ENCODE measurements at regions of chr3 and their contacts with region 1.

Region 1: GRCh38 chr3:179322286-179323196 is at the start of gene ZNF639:
- DNase-seq: peak; percentile 78
- H3K4me3 Mint-ChIP-seq: peak within 1 kb of the TSS; percentile 90
- H3K27ac Mint-ChIP-seq: peak within 1 kb of the TSS; percentile 92
- H3K4me1 Mint-ChIP-seq: peaks cover 32% of the 10 kb centered on the region
- H3K27me3 Mint-ChIP-seq: peaks cover 16% of the 10 kb centered on the region
- total RNA-seq, gene ZNF639: 36.2 and 37.0 TPM in 2 replicates

Region 2: GRCh38 chr3:179071550-179072397 is 250.8 kb before region 1 on chr3 and contains the start of gene ZMAT3:
- intact Hi-C with region 1: loop called (anchors 1 kb)
- DNase-seq: peak; percentile 84
- H3K4me3 Mint-ChIP-seq: peak within 1 kb of the TSS; percentile 98
- H3K27ac Mint-ChIP-seq: peak within 1 kb of the TSS; percentile 95
- H3K4me1 Mint-ChIP-seq: peaks cover 43% of the 10 kb centered on the region
- H3K27me3 Mint-ChIP-seq: peaks cover 3% of the 10 kb centered on the region
- total RNA-seq, gene ZMAT3: 16.9 and 17.3 TPM in 2 replicates

Region 3: GRCh38 chr3:179347345-179348194 is 25.0 kb after region 1 on chr3 and contains the start of gene MFN1:
- intact Hi-C with region 1: loop called (anchors 1 kb)
- DNase-seq: peak; percentile 87
- H3K4me3 Mint-ChIP-seq: peak within 1 kb of the TSS; percentile 98
- H3K27ac Mint-ChIP-seq: peak within 1 kb of the TSS; percentile 96
- H3K4me1 Mint-ChIP-seq: peaks cover 25% of the 10 kb centered on the region
- H3K27me3 Mint-ChIP-seq: no peaks in the 10 kb centered on the region
- total RNA-seq, gene MFN1: 29.5 and 37.7 TPM in 2 replicates

Region 4: GRCh38 chr3:179604321-179605078 is 282.0 kb after region 1 on chr3 and contains the starts of genes MRPL47 and NDUFB5:
- intact Hi-C with region 1: loop called (anchors 2 kb)
- DNase-seq: peak; percentile 91
- H3K4me3 Mint-ChIP-seq: peak within 1 kb of the TSS; percentile 97
- H3K27ac Mint-ChIP-seq: peak within 1 kb of the TSS; percentile 99
- H3K4me1 Mint-ChIP-seq: peaks cover 36% of the 10 kb centered on the region
- H3K27me3 Mint-ChIP-seq: no peaks in the 10 kb centered on the region
- total RNA-seq, gene MRPL47: 65.1 and 65.5 TPM in 2 replicates
- total RNA-seq, gene NDUFB5: 81.5 and 86.1 TPM in 2 replicates

Region 5: DNA sequence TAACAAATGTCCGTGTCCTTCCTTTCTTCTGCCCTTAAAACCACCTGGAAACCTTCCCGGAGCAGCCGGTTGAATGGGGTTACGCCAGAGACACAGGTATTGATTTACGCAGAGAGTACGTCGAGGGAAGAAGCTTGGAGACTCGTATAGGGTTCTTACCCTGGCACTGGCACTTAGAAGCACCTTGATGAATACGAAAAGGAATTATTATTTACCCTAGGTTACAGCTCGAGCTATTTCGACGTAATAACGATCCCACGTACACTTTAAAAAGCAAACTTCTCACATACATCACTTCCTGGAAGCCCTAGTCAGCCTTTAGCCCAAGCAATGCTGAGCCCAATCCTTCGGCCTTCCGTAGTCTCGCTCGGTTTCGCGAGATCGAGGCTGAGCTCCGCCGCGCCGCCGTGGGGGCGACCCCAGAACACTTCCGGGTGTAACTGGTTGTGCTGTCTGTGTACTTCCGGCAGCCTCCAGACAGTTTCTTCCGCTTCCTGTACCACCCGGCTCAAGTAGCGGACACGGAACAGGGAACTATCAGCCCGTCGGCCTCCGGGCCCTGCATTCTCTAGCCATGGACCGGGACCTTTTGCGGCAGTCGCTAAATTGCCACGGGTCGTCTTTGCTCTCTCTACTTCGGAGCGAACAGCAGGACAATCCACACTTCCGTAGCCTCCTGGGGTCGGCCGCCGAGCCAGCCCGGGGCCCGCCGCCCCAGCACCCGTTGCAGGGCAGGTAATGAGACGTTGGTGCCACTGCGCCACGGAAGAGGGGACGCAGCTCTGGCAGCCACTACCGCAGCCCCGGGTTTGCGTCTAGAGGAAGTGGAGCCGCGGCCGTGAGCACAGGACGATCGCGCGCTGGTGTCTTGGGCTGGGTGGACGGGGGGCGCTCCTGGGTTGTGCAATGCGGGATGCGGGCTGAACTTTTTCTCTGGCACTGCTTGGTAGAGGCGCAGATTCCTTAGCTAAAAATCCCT is 1279.4 kb after region 1 on chr3 and contains the start of gene TTC14:
- intact Hi-C with region 1: loop called (anchors 5 kb)
- DNase-seq: peak; percentile 92
- H3K4me3 Mint-ChIP-seq: peak within 1 kb of the TSS; percentile 91
- H3K27ac Mint-ChIP-seq: peak within 1 kb of the TSS; percentile 95
- H3K4me1 Mint-ChIP-seq: peaks cover 23% of the 10 kb centered on the region
- H3K27me3 Mint-ChIP-seq: peaks cover 20% of the 10 kb centered on the region
- total RNA-seq, gene TTC14: 43.9 and 50.0 TPM in 2 replicates